ENCODE measurements at regions of chr16 and their contacts with region 1.

Region 1: DNA sequence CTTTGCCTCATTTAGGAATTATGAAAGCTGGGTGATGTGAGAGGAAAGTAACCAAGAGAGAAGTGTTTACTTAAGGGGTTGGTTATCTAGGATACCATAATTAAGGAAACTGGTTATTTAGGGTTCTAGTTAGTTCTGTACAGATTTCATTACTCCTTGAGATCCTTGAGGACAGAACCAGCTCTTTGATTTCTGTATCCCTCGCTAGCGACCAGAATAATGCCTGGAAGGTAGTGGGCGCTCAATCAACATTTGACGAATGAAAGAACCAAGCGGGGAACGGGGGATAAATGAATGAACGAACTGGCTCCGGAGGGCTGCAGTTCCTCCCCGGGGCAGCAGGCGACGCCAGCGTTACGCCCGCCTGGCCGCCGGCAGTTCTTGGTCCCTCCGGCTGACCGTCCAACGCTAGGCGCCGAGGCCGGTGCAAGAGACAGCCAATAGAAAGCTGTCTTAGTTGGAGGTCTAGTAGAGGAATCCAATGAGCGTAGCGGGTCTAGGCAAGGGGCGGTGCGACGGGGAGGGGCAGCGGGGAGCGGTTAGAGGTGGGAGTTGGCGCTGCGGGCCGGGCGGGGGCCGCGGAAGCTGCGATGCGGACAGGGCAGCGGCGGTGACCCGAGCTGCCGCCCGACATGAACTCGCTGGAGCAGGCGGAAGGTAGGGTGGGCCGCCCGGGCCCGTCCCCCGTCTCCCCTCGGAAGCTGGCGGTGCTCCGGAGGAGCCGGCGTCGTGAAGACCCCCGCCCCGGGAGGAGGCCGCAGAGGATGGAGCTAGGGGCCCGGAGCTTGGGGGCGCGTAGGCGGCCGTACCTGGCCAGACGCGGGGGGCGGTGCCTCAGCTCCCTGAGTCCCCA is at the start of gene CNEP1R1:
- DNase-seq: peak; percentile 92
- ATAC-seq: peak; percentile 99
- H3K4me3 Mint-ChIP-seq: peak within 1 kb of the TSS; percentile 96
- H3K27ac Mint-ChIP-seq: peak within 1 kb of the TSS; percentile 92
- H3K4me1 Mint-ChIP-seq: peaks cover 15% of the 10 kb centered on the region
- H3K27me3 Mint-ChIP-seq: peaks cover 2% of the 10 kb centered on the region
- total RNA-seq, gene CNEP1R1: 29.0 to 31.7 TPM

Region 2: GRCh38 chr16:49993579-49993978 is 31.3 kb before region 1 on chr16:
- POLR2A ChIA-PET with region 1: no interaction called
- DNase-seq: no peak
- ATAC-seq: no peak
- H3K4me3 Mint-ChIP-seq: no peak overlapping the region
- H3K27ac Mint-ChIP-seq: no peak overlapping the region
- H3K4me1 Mint-ChIP-seq: peaks cover 3% of the 10 kb centered on the region
- H3K27me3 Mint-ChIP-seq: peaks cover 16% of the 10 kb centered on the region

Region 3: DNA sequence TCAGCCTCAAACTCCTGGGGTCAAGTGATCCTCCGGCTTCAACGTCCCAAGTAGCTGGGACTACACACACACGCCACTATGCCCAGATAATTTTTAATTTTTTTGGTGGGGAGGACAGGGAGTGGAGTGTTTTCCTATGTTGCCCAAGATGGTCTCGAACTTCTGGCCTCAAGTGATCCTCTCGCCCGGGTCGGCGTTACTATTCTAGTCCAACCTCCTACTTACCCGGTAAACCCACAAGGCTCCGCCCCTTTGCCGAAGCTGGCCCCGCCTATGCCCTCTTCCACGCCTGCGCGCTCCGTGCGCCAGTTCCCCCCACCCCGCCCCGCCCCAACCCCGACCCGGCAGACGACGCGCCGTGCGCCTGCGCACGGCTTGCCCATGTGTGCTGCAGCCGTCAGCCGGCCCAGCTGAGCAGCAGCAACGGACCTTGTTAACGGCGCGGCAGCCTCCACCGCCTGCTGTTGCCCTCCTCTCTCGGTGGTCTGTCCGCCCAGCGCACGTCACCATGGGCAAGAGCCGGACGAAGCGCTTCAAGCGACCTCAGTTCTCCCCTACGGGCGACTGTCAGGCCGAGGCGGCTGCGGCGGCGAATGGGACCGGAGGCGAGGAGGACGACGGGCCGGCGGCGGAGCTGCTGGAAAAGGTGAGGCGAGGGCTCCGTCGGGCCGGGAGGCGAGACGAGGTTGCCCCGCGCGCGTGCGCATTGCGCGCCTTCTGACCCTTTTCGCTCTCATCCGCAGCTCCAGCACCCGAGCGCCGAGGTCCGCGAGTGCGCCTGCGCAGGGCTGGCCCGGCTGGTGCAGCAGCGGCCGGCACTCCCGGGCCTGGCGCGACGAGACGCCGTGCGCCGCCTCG is 40.9 kb after region 1 on chr16 and contains the start of gene HEATR3:
- POLR2A ChIA-PET with region 1: interaction called, 17 read pairs
- DNase-seq: peak; percentile 97
- ATAC-seq: peak; percentile 89
- H3K4me3 Mint-ChIP-seq: peak within 1 kb of the TSS; percentile 95
- H3K27ac Mint-ChIP-seq: peak within 1 kb of the TSS; percentile 93
- H3K4me1 Mint-ChIP-seq: peaks cover 25% of the 10 kb centered on the region
- H3K27me3 Mint-ChIP-seq: no peaks in the 10 kb centered on the region
- total RNA-seq, gene HEATR3: 19.8 to 20.1 TPM

Measured in activated naive CD8-positive, alpha-beta T cell treated with anti-CD3 and anti-CD28 coated beads, Interleukin-2, amount 10 ng/mL, durations not matched to agents 7 days and 5 days (primary cell).